ENCODE measurements at regions of chr3 and their contacts with region 1.

Region 1: DNA sequence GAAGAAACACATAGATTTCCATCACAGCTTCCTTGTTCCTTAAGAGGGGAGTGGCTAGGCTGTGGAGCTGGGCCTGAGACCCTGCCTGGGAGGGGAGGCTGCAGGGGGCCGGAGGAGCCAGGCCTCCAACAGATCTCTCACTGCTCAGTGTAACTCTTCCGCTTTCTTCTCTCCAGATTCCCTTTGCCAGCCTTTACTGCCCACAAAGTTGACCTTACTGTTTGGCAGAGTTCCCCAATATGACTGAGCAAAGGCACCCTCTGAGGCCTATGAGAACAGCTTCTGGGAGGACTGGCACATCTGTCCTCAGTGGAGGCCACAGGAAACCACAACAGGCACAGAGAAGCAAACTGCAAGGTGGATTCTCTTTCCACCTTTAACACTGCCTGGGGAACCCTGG is 38.1 kb downstream of the SLCO2A1 start:
- DNase-seq: peak; percentile 72

Region 2: GRCh38 chr3:133776794-133777438 is 214.7 kb before region 1 on chr3:
- intact Hi-C with region 1: no loop called
- DNase-seq: no peak

Region 3: GRCh38 chr3:133949438-133949837 is 42.2 kb before region 1 on chr3:
- intact Hi-C with region 1: loop called (anchors 2 kb)
- DNase-seq: no peak

Region 4: GRCh38 chr3:134517791-134518190 is 526.2 kb after region 1 on chr3:
- intact Hi-C with region 1: no loop called
- DNase-seq: no peak

Measured in cardiac septum (tissue), 1 donor.